Activated CD4-positive, alpha-beta memory T cell treated with anti-CD3 and anti-CD28 coated beads for 36 hours (primary cell): ENCODE measurements at regions of chr20 and their contacts with region 1.

Region 1: DNA sequence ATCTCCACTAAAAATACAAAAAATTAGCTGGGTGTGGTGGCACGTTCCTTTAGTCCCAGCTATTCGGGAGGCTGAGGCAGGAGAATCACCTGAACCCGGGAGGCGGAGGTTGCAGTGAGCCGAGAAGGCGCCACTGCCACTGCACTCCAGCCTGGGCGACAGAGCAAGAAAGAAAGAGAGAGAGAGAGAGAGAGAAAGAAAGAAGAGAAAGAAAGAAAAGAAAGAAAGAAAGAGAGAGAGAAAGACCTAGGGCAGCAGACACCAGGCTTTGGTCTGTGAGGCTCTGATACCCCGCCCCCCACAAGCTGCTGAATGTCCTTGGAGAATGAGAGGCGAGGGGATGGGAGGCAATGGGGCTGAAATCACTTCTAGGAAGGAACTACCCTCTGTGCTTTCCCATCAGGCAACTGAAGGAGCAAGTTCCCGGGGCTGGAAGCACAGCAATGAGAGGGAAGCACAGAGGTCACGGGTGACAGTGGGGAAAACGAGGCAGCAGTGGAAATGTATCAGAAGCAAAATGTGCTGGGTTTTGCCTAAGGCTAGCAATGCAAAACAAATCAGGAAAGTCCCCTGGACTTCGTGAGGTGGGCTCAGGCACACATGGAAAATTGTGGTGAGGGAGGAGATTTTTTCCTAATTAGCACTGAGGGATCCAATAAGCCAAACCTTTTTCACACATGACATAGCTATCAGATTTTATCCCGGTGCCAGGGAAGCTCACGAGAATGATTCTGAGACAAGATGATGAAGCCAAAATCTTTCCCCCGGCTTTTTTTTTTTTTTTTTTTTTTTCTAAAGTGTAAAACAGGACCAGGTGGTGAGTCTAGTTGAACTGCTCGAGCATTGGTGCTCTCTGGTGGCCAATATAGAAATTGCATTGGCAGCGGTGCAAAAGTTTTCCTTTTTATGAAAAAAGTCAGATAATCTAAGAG is 16.9 kb upstream of the ARFGEF2 start:
- DNase-seq: peak; percentile 80
- H3K4me3 Mint-ChIP-seq: no peak overlapping the region
- H3K27ac Mint-ChIP-seq: peak overlapping the region; percentile 28
- H3K4me1 Mint-ChIP-seq: peaks cover 14% of the 10 kb centered on the region
- H3K27me3 Mint-ChIP-seq: no peaks in the 10 kb centered on the region

Region 2: GRCh38 chr20:48635433-48636310 is 269.0 kb before region 1 on chr20:
- CTCF ChIA-PET with region 1: interaction called, 12 read pairs
- POLR2A ChIA-PET with region 1: no interaction called
- intact Hi-C with region 1: loop called (anchors 1 kb)
- DNase-seq: peak; percentile 83
- H3K4me3 Mint-ChIP-seq: no peak overlapping the region
- H3K27ac Mint-ChIP-seq: peak overlapping the region; percentile 74
- H3K4me1 Mint-ChIP-seq: peaks cover 5% of the 10 kb centered on the region
- H3K27me3 Mint-ChIP-seq: no peaks in the 10 kb centered on the region

Region 3: DNA sequence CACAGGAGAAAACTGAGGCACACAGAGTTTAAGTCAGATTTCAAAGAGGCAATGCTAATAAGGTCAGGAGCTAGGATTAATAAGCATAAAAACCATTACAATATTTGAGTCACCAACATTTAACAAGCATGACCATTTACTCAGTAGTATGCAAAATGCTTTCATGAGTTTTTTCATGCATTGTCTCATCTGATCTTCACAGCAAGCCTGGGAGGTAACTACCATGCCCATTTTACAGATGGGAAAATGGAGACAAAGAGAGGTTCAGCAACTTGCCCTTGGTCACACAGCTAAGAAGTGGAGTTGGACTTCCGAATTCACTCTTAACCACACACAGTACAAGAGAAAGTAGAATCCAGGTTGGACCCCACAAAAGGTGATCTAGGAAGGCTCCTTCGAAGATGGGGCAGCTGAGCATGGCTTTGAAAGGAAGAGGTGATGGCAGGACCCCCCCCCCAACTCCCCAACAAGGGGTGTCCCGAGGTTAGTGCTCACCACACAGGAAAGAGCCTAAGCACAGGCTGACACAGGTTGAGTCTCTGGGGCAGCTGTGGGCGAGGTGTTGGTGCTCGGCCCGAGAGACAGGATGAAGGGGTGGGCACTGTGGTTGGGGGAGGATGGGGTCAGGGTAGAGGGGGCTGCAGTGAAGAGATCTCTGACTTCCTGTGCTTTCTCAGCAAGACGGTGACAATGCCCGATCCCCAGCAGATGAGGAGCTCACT is 185.6 kb before region 1 on chr20:
- CTCF ChIA-PET with region 1: interaction called, 4 read pairs
- POLR2A ChIA-PET with region 1: no interaction called
- intact Hi-C with region 1: loop called (anchors 5 kb)
- DNase-seq: peak; percentile 70
- H3K4me3 Mint-ChIP-seq: peak overlapping the region; percentile 54
- H3K27ac Mint-ChIP-seq: peak overlapping the region; percentile 79
- H3K4me1 Mint-ChIP-seq: peaks cover 88% of the 10 kb centered on the region
- H3K27me3 Mint-ChIP-seq: no peaks in the 10 kb centered on the region

Region 4: GRCh38 chr20:48892844-48893243 is 11.8 kb before region 1 on chr20:
- CTCF ChIA-PET with region 1: interaction called, 10 read pairs
- POLR2A ChIA-PET with region 1: no interaction called
- intact Hi-C with region 1: no loop called
- DNase-seq: no peak
- H3K4me3 Mint-ChIP-seq: no peak overlapping the region
- H3K27ac Mint-ChIP-seq: no peak overlapping the region
- H3K4me1 Mint-ChIP-seq: no peaks in the 10 kb centered on the region
- H3K27me3 Mint-ChIP-seq: no peaks in the 10 kb centered on the region

Region 5: GRCh38 chr20:48962976-48963771 is 58.5 kb after region 1 on chr20:
- CTCF ChIA-PET with region 1: no interaction called
- POLR2A ChIA-PET with region 1: no interaction called
- intact Hi-C with region 1: no loop called
- DNase-seq: no peak
- H3K4me3 Mint-ChIP-seq: no peak overlapping the region
- H3K27ac Mint-ChIP-seq: no peak overlapping the region
- H3K4me1 Mint-ChIP-seq: peaks cover 4% of the 10 kb centered on the region
- H3K27me3 Mint-ChIP-seq: no peaks in the 10 kb centered on the region